B cell (primary cell): ENCODE measurements at regions of chr5 and their contacts with region 1.

Region 1: DNA sequence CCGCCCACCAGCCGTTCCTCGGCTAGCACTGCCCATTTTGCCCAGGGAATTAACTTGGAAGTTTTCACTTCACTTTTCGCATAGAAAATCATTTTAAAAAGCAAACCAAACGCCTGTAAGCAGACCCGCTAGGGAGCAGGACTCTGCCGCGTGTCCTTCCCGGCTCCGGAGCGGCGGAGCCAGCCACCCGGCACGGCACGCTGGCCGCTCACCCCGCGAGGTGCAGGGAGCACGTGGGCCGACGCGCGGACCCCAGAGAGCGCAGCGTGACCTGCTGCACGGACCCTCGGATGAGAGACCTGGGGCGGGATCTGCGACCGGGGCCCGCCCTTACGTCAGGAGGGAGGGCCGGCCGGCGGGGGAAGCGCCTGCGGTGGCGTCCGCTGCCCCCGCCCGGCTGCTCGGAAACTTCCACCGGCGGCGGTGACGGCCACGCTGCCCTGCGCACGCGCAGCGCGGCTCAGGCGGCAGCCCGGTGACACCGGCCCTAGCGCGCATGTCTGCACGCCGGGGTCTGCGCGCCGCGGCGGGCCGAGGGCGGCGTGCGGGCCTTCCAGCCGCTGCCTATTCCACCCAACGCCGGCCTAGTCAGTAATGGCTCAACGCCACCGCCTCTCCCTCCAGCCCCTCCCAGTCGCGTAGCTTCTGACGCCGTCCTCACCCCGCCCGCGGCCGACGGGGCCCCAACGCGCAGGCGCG is 506 bp upstream of the TENT4A start:
- DNase-seq: peak; percentile 99
- ATAC-seq: peak; percentile 74
- H3K4me3 ChIP-seq: peak overlapping the region; percentile 58 to 92 (median 67)
- H3K4me3 Mint-ChIP-seq: peak overlapping the region; percentile 92
- H3K27ac ChIP-seq: peak overlapping the region; percentile 39 to 80
- H3K27ac Mint-ChIP-seq: peak overlapping the region; percentile 96
- H3K4me1 ChIP-seq: peaks cover 34 to 39% of the 10 kb centered on the region in 2 donors
- H3K4me1 Mint-ChIP-seq: peaks cover 41% of the 10 kb centered on the region
- H3K27me3 ChIP-seq: no peaks in the 10 kb centered on the region
- H3K27me3 Mint-ChIP-seq: no peaks in the 10 kb centered on the region
- CTCF ChIP-seq: peak; percentile 14

Region 2: DNA sequence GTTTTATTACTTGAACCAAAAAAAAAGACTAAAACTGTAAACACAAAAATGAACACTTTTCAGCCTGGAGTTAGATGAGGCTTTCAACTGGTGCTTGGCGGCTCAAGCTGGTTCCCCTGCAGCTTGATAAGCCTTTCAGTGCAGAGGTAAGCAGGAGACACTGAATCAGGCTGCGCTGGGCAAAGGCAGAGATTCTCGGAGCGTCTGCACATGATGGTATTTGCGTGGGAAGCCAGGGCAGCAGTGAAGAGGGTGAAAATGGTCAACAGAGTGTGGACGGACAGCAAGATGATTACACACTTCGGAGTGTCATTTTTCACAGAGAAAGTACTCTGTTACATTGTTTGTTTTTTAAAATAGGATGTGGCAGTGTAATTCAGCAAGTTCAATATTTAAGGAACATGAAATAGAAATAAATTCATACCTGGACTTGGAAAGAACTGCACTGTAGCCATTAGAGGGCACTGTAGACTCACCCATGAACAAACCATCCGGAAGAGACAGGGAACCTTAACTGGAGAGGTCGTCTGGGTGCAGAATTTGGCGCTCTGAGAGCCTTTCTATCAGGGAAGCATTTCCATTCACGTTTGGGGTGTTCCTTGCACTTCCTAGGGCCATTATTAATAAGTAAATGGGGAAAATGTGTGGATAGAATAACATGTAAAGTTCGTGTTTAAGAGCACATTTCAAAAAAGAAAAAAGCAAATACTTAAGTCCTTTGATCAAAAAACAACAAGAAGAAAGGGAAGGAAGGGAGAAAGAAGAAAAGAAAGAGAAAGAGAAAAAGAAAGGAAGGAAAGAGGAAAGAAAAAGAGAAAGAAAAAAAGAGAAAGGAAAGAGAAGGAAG is 1220.4 kb before region 1 on chr5:
- CTCF ChIA-PET with region 1: no interaction called
- POLR2A ChIA-PET with region 1: no interaction called
- intact Hi-C with region 1: loop called (anchors 10 kb)
- DNase-seq: peak; percentile 74
- ATAC-seq: peak; percentile 22
- H3K4me3 ChIP-seq: no peak overlapping the region
- H3K4me3 Mint-ChIP-seq: peak overlapping the region; percentile 69
- H3K27ac ChIP-seq: no peak overlapping the region
- H3K27ac Mint-ChIP-seq: peak overlapping the region; percentile 32
- H3K4me1 ChIP-seq: peaks cover 11 to 18% of the 10 kb centered on the region in 2 donors
- H3K4me1 Mint-ChIP-seq: peaks cover 23% of the 10 kb centered on the region
- H3K27me3 ChIP-seq: no peaks in the 10 kb centered on the region
- H3K27me3 Mint-ChIP-seq: no peaks in the 10 kb centered on the region
- CTCF ChIP-seq: peak; percentile 87

Region 3: DNA sequence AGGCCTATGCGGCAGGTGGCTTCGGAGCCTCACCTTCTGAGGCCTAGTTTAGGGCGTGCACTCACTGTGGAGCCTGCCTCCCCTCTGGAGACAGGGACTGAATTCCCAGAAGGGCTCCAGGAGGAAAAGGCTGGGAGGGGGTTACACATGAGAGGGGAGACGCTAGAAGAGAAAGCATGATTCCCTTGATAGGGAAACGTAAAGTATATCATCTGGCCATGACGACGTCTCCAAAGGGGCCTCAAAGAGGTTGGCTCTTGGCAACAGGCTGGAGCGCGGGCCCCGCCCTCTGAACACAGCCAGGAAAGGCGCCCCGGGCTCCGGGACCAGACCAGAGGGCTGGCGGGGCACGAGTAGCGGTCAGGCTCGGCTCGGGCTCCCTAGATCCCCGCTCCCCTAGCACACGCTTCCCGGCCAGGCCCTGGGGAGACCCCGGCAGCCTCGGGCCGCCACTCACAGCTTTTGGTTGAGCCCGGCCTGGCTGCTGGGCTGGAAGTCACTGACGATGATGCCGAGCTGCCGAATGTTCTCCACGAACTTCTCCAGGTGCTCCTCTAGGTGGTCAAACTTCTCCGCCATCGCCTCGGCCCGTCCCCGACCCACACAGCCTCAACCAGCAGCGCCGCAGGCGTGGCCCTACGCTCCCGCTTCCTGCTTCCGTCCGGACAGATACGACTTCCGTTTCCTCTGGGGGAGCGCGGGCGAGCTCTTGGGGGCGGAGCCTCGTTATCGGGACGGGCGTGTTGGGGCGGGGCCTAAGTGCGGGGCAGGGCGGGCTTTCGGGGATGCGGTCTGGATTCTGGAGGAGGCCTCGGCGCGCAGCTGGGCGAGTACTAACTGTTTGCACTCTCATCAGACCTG is 334.6 kb before region 1 on chr5 and contains the start of gene MED10:
- CTCF ChIA-PET with region 1: no interaction called
- POLR2A ChIA-PET with region 1: no interaction called
- intact Hi-C with region 1: loop called (anchors 1 kb)
- DNase-seq: peak; percentile 94
- ATAC-seq: peak; percentile 99
- H3K4me3 ChIP-seq: peak within 1 kb of the TSS; percentile 68 to 97 (median 82)
- H3K4me3 Mint-ChIP-seq: peak within 1 kb of the TSS; percentile 95
- H3K27ac ChIP-seq: peak within 1 kb of the TSS; percentile 73 to 76
- H3K27ac Mint-ChIP-seq: peak within 1 kb of the TSS; percentile 95
- H3K4me1 ChIP-seq: peaks cover 16 to 21% of the 10 kb centered on the region in 2 donors
- H3K4me1 Mint-ChIP-seq: peaks cover 34% of the 10 kb centered on the region
- H3K27me3 ChIP-seq: no peaks in the 10 kb centered on the region
- H3K27me3 Mint-ChIP-seq: peaks cover 3% of the 10 kb centered on the region
- CTCF ChIP-seq: no peak
- total RNA-seq, gene MED10: 49.9 and 51.4 TPM in 2 replicates

Region 4: GRCh38 chr5:6632917-6633468 is 79.7 kb before region 1 on chr5 and contains the starts of genes NSUN2 and SRD5A1:
- CTCF ChIA-PET with region 1: interaction called, 4 read pairs
- POLR2A ChIA-PET with region 1: interaction called, 12 read pairs
- intact Hi-C with region 1: loop called (anchors 1 kb)
- DNase-seq: peak; percentile 97
- ATAC-seq: peak; percentile 89
- H3K4me3 ChIP-seq: peak within 1 kb of the TSS; percentile 74 to 91 (median 84)
- H3K4me3 Mint-ChIP-seq: peak within 1 kb of the TSS; percentile 95
- H3K27ac ChIP-seq: peak within 1 kb of the TSS; percentile 98 to 99
- H3K27ac Mint-ChIP-seq: peak within 1 kb of the TSS; percentile 99
- H3K4me1 ChIP-seq: peaks cover 16 to 28% of the 10 kb centered on the region in 2 donors
- H3K4me1 Mint-ChIP-seq: peaks cover 38% of the 10 kb centered on the region
- H3K27me3 ChIP-seq: no peaks in the 10 kb centered on the region
- H3K27me3 Mint-ChIP-seq: no peaks in the 10 kb centered on the region
- CTCF ChIP-seq: no peak
- total RNA-seq, gene NSUN2: 83.7 and 85.0 TPM in 2 replicates
- total RNA-seq, gene SRD5A1: 20.8 and 29.2 TPM in 2 replicates

Region 5: DNA sequence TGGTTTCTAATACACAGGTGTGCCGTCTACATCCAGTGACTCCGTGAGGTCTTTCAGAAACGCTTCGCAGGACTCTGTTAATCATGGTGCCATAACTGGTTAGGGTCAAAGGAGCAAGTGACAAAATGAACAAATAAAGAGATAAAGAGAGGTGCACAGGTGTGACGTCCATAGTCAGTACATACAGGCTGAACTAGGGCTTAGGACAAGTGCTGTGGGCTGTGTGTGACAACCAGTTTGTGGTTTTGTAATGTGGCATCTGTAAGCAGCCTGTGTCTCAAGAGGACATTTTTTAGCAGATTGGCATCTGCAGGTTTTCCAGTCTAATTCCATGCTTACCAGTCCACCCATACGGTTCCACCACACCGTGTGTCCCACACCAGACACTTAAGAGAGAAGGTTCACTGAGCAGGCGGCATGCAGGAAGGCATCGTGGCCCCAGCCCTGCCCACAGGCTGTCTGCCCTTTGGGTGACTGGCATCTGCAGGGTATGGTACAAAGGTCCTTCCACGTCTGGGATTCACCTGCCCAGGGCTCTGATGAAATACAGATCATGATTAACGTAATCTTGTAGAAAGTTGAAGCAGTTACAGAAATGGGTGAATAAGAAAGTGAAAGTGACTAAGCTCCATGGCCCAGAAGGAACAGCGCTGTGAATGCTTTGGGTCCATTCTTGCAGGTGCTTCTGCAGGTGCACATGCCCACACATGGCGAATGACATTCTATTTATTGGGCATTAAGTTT is 52.6 kb before region 1 on chr5:
- CTCF ChIA-PET with region 1: interaction called, 4 read pairs
- POLR2A ChIA-PET with region 1: interaction called, 3 read pairs
- intact Hi-C with region 1: loop called (anchors 1 kb)
- DNase-seq: peak; percentile 80
- ATAC-seq: peak; percentile 82
- H3K4me3 ChIP-seq: peak overlapping the region in 4 of 5 experiments; percentile 35 to 62 (median 54)
- H3K4me3 Mint-ChIP-seq: peak overlapping the region; percentile 78
- H3K27ac ChIP-seq: peak overlapping the region; percentile 82 to 87
- H3K27ac Mint-ChIP-seq: peak overlapping the region; percentile 93
- H3K4me1 ChIP-seq: peaks cover 20 to 26% of the 10 kb centered on the region in 2 donors
- H3K4me1 Mint-ChIP-seq: peaks cover 30% of the 10 kb centered on the region
- H3K27me3 ChIP-seq: no peaks in the 10 kb centered on the region
- H3K27me3 Mint-ChIP-seq: no peaks in the 10 kb centered on the region
- CTCF ChIP-seq: no peak

Region 6: DNA sequence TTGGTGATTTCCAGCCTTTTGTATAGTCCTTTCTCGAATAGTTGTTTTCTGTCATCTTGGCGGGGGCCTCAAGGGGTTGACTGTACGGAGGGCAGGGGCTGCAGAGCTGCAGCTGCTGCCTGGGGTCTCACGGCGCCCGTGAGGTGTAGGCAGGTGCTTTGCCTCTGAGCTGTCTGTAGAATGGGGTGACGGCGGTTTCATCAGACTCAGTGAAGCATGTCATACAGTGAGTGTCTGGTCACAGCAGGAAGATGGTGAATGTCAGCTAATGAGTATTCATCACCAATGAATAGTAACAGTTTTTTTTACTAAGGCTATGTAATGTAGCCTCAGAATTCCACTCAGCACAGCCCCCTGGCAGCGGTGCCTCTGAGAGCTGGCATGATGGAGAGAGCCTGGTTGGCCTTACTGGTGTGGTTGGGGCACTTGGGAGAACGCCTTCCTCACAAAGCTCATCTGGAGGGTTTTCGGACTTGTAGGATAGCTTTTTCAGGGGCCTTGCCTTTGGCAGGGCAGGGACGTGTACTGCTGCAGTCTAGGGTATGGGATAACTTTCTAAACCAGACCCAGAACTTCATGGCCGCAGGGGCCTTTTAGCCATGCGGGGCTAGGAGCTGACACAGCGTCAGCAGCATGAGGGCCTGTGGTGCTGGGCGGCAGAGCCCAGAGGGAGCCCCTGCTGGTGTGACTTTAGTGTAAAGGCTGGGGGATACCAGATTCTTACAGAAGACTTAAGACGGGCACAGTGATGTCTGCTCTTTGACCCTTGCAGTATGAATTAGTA is 15.5 kb after region 1 on chr5:
- CTCF ChIA-PET with region 1: interaction called, 6 read pairs
- POLR2A ChIA-PET with region 1: interaction called, 3 read pairs
- intact Hi-C with region 1: loop called (anchors 2 kb)
- DNase-seq: peak; percentile 46
- ATAC-seq: peak; percentile 94
- H3K4me3 ChIP-seq: no peak overlapping the region
- H3K4me3 Mint-ChIP-seq: peak overlapping the region; percentile 80
- H3K27ac ChIP-seq: no peak overlapping the region
- H3K27ac Mint-ChIP-seq: peak overlapping the region; percentile 87
- H3K4me1 ChIP-seq: peaks cover 29 to 34% of the 10 kb centered on the region in 2 donors
- H3K4me1 Mint-ChIP-seq: peaks cover 81% of the 10 kb centered on the region
- H3K27me3 ChIP-seq: no peaks in the 10 kb centered on the region
- H3K27me3 Mint-ChIP-seq: no peaks in the 10 kb centered on the region
- CTCF ChIP-seq: no peak

Region 7: DNA sequence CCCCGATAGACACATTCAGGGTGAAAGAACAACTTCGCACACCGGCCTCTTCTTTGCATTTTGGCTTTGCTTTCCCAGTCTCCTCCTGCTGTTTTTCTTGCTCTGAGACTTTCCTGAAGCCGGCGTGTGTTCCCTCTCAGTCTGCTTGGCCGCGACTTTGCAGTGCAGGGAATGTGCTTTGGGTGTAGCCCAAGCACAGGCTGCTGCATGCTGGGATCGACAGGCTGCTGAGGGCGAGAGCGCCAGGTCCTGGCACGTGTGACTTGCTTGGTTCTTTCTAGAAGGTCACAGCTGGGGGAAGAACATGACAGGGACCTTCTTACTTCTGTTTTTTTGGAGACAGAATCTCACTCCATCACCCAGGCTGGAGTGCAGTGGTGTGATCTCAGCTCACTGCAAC is 41.1 kb after region 1 on chr5:
- CTCF ChIA-PET with region 1: no interaction called
- POLR2A ChIA-PET with region 1: no interaction called
- intact Hi-C with region 1: no loop called
- DNase-seq: no peak
- ATAC-seq: no peak
- H3K4me3 ChIP-seq: no peak overlapping the region
- H3K4me3 Mint-ChIP-seq: no peak overlapping the region
- H3K27ac ChIP-seq: no peak overlapping the region
- H3K27ac Mint-ChIP-seq: no peak overlapping the region
- H3K4me1 ChIP-seq: no peaks in the 10 kb centered on the region
- H3K4me1 Mint-ChIP-seq: no peaks in the 10 kb centered on the region
- H3K27me3 ChIP-seq: no peaks in the 10 kb centered on the region
- H3K27me3 Mint-ChIP-seq: no peaks in the 10 kb centered on the region
- CTCF ChIP-seq: no peak

Region 8: DNA sequence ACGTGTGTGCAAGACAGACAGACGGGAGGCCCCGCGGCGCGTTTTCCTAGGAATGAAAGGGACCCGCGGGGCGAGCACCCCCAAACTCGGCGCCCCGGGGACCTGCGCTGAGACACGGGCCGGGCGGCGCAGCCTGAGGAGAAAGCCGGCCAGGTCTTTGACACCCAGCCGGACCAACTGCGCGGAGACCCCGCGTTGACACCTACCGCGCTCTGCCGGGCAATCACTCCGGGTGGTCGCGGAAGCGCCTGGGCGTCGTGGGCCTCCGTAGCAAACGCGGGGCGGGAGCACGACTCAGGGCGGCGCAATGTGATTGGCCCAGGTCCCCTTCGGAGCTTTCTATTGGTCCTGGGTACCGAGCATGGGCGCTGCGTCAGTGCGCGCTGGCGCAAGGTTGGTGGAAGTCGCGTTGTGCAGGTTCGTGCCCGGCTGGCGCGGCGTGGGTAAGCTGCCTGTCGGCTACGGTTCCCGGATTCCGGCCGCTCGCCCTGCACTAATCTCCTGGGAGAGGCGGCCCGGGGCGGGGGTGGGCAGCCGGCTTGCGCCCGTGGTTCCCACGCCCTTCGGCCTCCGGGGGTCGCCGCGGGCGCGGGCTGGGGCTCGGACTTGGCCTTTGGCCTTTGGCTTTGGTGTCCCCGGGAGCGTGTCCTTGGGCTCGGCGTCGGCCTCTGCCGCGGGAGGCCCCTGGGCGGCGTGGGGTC is 1156.2 kb after region 1 on chr5 and contains the starts of genes FASTKD3 and MTRR:
- CTCF ChIA-PET with region 1: no interaction called
- POLR2A ChIA-PET with region 1: no interaction called
- intact Hi-C with region 1: loop called (anchors 5 kb)
- DNase-seq: peak; percentile 92
- ATAC-seq: peak; percentile 99
- H3K4me3 ChIP-seq: peak within 1 kb of the TSS; percentile 82 to 92 (median 87)
- H3K4me3 Mint-ChIP-seq: peak within 1 kb of the TSS; percentile 93
- H3K27ac ChIP-seq: peak within 1 kb of the TSS; percentile 31 to 79
- H3K27ac Mint-ChIP-seq: peak within 1 kb of the TSS; percentile 86
- H3K4me1 ChIP-seq: peaks cover 23 to 24% of the 10 kb centered on the region in 2 donors
- H3K4me1 Mint-ChIP-seq: peaks cover 64% of the 10 kb centered on the region
- H3K27me3 ChIP-seq: no peaks in the 10 kb centered on the region
- H3K27me3 Mint-ChIP-seq: no peaks in the 10 kb centered on the region
- CTCF ChIP-seq: no peak
- total RNA-seq, gene FASTKD3: 10.0 and 11.0 TPM in 2 replicates
- total RNA-seq, gene MTRR: 60.5 and 67.8 TPM in 2 replicates